Activated naive CD8-positive, alpha-beta T cell treated with anti-CD3 and anti-CD28 coated beads, Interleukin-2, amount 10 ng/mL, durations not matched to agents 7 days and 5 days (primary cell): ENCODE measurements at regions of chr5 and their contacts with region 1.

Region 1: GRCh38 chr5:217860-218456 is at the starts of genes CCDC127 and SDHA:
- DNase-seq: peak; percentile 100
- ATAC-seq: peak; percentile 93
- H3K4me3 Mint-ChIP-seq: peak within 1 kb of the TSS; percentile 96
- H3K27ac Mint-ChIP-seq: peak within 1 kb of the TSS; percentile 95
- H3K4me1 Mint-ChIP-seq: peaks cover 42% of the 10 kb centered on the region
- H3K27me3 Mint-ChIP-seq: no peaks in the 10 kb centered on the region
- total RNA-seq, gene CCDC127: 6.2 to 7.8 TPM
- total RNA-seq, gene SDHA: 167 to 172 TPM

Region 2: GRCh38 chr5:188488-189481 is 29.2 kb before region 1 on chr5:
- POLR2A ChIA-PET with region 1: interaction called, 14 read pairs
- DNase-seq: peak; percentile 92
- ATAC-seq: peak; percentile 93
- H3K4me3 Mint-ChIP-seq: peak overlapping the region; percentile 42
- H3K27ac Mint-ChIP-seq: peak overlapping the region; percentile 73
- H3K4me1 Mint-ChIP-seq: peaks cover 8% of the 10 kb centered on the region
- H3K27me3 Mint-ChIP-seq: no peaks in the 10 kb centered on the region

Region 3: DNA sequence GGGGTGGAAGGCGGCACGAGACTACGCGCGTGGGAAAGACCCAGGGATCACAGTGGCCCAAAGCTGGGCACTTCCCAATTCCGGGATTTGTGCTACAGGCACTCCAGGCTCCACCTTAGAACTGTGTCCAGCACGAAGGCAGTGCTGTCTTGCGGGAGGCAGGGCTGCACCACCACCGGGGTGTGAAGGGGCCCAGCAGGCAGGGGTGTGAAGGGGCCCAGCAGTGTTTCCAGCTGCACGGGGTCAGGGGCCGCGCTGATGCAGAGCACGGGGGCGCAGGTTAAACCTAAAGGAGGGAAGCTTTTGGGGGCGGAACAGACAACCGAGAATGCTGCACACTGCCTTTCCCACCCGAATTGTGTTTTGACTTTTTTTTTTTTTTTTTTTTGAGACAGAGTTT is 52.4 kb after region 1 on chr5:
- POLR2A ChIA-PET with region 1: interaction called, 20 read pairs
- DNase-seq: peak; percentile 33
- ATAC-seq: no peak
- H3K4me3 Mint-ChIP-seq: peak overlapping the region; percentile 92
- H3K27ac Mint-ChIP-seq: peak overlapping the region; percentile 45
- H3K4me1 Mint-ChIP-seq: peaks cover 14% of the 10 kb centered on the region
- H3K27me3 Mint-ChIP-seq: no peaks in the 10 kb centered on the region